Activated T-helper 1 cell treated with anti-CD3 and anti-CD28 coated beads, Interleukin-12 subunit alpha, Interleukin-12 subunit beta, Interleukin-2, Interleukin-4 antibody, amounts not matched to agents 30 ng/mL and 10 ng/mL and 1 ng/mL, durations not matched to agents 14 hours and 24 hours and 36 hours (primary cell): ENCODE measurements at regions of chr22 and their contacts with region 1.

Region 1: DNA sequence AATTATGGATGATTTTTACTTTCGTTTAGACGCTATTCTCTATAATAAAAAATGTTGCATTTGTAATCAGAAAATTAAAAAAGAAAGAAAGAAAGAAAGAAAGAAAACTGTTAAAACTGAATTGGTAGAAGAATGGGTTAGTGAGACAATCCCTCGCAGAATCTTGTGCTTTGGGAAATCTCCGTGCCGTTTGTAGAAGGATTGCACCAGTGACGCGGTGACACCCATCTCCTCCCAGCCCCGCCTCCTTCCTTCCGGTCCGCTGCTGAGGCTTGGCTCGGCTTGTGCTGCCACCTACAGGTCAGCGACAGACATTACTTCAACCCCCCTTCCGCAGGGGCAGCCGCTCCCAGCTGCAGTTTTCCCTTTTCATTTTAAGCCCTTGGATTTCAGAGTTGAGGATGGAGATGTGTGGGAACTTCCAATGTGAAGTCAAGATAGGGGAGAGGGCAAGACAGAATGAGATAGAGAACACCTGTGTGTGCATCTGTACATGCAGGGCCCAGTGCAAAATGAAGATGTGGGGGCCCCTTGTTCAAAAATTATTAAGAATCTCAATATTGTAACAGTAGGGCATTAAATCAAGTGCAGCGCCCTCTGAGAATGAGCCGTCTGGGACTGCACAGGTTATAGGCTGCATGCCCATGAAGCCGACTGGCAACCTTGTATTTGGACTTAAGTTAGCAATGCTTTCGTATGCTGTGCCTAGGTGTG is 41.1 kb downstream of the TST start:
- DNase-seq: peak; percentile 84
- H3K4me3 Mint-ChIP-seq: peak overlapping the region; percentile 86
- H3K27ac Mint-ChIP-seq: peak overlapping the region; percentile 74
- H3K4me1 Mint-ChIP-seq: peaks cover 15% of the 10 kb centered on the region
- H3K27me3 Mint-ChIP-seq: peaks cover 8% of the 10 kb centered on the region

Region 2: GRCh38 chr22:36546092-36546804 is 431.9 kb before region 1 on chr22:
- intact Hi-C with region 1: loop called (anchors 5 kb)
- DNase-seq: peak; percentile 16
- H3K4me3 Mint-ChIP-seq: no peak overlapping the region
- H3K27ac Mint-ChIP-seq: no peak overlapping the region
- H3K4me1 Mint-ChIP-seq: peaks cover 29% of the 10 kb centered on the region
- H3K27me3 Mint-ChIP-seq: peaks cover 6% of the 10 kb centered on the region

Region 3: DNA sequence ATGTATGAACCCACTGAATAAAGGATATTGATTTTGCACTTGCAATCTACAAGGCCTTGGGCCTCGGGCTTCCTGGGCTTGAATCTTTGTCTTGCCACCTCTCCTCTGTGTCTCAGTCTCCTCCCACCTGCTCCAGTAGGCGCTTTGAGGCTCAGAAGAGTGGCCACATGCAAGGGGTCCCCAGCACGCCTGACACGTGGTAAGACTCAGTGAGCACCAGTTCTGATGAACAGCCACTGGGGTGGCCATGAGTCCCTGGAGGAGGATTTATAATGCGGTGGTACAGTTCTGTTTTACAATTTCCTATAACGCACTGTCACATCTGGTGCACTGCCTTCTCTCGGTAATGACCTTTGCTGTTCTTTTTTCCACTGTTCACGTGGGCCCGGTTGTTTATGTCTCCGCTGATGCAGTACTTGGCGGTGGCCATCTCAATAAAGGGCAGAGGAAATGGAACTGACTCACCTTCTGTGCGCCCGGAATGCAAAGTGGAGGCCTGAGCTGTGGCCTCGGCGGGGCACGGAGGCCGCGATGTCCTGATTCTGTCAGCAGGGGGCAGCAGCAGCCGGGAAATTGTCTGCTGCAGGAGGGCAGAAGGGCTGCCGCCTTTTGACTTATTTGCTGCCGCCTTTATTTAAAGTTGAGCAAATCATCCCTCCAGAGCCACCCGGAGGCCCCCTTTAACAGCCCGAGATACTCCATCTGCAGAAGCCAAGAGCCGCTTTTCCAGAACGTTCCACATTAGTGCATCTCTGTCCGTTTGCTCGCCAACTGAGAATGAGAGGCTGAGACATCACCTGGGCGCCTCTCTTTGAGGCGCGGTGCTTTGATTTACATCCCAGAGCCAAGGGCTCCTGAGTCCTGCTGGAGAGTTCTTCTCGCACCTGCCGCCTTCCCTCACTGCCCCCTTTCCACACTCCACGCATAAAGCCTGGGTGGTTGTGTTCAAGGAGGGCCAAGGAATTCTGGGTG is 196.2 kb before region 1 on chr22:
- intact Hi-C with region 1: loop called (anchors 1 kb)
- DNase-seq: peak; percentile 86
- H3K4me3 Mint-ChIP-seq: peak overlapping the region; percentile 52
- H3K27ac Mint-ChIP-seq: peak overlapping the region; percentile 95
- H3K4me1 Mint-ChIP-seq: peaks cover 38% of the 10 kb centered on the region
- H3K27me3 Mint-ChIP-seq: peaks cover 6% of the 10 kb centered on the region

Region 4: GRCh38 chr22:36873680-36874537 is 104.2 kb before region 1 on chr22:
- intact Hi-C with region 1: loop called (anchors 1 kb)
- DNase-seq: peak; percentile 52
- H3K4me3 Mint-ChIP-seq: peak overlapping the region; percentile 30
- H3K27ac Mint-ChIP-seq: peak overlapping the region; percentile 86
- H3K4me1 Mint-ChIP-seq: peaks cover 28% of the 10 kb centered on the region
- H3K27me3 Mint-ChIP-seq: no peaks in the 10 kb centered on the region

Region 5: DNA sequence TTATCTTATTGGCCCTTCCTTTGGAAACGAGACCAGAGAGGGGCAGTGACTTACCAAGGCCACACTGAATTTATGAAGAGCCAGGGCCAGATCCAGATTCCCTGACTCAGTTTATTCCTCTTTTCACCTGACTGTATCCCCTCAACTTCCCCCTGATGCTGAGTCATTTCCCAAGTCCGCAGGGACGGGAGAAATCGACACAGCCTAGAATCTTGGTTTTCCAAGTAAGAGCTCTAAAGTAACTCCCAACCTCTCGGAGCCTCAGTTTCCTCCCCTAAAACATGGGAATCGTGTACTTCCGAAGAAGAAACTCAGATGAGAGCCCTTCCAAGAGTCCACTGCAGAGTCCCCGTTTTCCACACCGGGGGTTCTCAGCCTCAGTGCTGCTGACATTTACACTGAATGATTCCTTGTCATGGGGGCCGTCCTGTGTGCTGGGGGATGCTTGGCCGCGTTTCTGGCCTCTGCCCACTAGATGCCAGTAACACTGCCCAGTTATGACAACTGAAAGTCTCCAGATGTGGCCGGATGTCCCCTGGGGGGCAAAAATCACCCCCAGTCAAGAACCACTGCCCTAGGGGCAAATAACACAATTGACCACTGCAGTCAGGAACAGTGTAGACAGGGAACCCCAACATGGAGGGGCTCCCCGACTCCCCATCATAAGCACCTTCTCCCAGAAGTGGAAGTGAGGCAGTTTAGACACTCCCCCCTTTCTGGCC is 52.6 kb after region 1 on chr22:
- intact Hi-C with region 1: no loop called
- DNase-seq: no peak
- H3K4me3 Mint-ChIP-seq: no peak overlapping the region
- H3K27ac Mint-ChIP-seq: no peak overlapping the region
- H3K4me1 Mint-ChIP-seq: no peaks in the 10 kb centered on the region
- H3K27me3 Mint-ChIP-seq: peaks cover 4% of the 10 kb centered on the region

Region 6: DNA sequence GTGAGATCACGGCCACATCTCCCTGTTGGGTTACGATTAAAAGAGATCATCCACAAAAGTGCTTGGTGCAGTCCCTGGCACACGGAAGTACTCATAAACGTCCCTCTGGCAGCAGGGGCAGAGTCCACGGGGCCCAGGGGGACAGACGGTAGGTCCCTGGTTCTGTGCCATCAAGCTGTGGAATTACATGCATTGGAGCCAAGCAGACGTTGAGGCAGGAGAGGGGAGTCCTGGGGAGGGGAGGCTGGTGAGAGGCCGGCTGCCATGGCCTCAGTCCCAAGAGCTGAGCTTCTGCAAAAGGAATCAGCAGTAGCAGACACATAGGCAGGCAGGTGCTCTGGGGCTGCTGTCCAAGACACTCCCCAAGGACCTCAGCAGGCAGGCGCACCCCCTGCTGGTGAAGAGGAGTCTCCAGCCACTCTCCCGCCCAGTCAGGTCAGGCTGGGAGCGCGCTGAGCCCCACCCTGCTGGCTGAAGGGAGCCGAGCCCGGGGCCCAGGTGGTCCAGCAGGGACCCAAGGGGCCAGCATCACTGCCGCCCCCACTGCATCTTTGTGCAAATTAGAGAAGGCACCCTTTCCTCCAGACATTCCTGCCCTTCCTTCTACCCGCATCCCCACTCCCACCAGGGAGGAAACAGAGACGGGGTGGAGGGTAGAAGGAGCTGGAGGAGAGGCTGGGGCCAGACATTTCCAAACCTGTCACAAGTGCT is 65.9 kb after region 1 on chr22:
- intact Hi-C with region 1: loop called (anchors 5 kb)
- DNase-seq: peak; percentile 39
- H3K4me3 Mint-ChIP-seq: no peak overlapping the region
- H3K27ac Mint-ChIP-seq: no peak overlapping the region
- H3K4me1 Mint-ChIP-seq: peaks cover 19% of the 10 kb centered on the region
- H3K27me3 Mint-ChIP-seq: no peaks in the 10 kb centered on the region